ENCODE measurements at regions of chr17 and their contacts with region 1.

Region 1: DNA sequence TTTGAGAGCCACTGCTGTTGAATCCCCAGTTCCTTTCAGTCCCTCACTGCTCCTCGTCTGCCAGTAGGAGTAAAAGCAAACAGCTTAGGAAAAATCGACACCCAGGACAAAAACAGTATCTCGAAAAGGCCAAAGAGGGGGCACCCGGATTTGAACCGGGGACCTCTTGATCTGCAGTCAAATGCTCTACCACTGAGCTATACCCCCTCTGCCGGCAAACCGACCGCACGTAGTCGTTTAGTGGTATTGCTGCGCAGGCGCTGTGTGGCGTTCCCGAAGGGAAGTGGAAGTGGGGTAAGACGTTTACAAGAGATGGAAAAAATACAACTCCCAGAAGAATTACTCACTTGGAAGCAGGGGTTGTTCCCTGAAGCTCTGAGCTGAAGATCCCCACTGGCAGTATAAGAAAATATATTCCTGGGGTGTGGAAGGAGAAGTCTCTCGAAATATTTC is 2.2 kb upstream of the PLXDC1 start:
- DNase-seq: peak; percentile 88
- H3K4me3 Mint-ChIP-seq: peak overlapping the region; percentile 98
- H3K27ac Mint-ChIP-seq: peak overlapping the region; percentile 98
- H3K4me1 Mint-ChIP-seq: peaks cover 29% of the 10 kb centered on the region
- H3K27me3 Mint-ChIP-seq: peaks cover 45% of the 10 kb centered on the region

Region 2: GRCh38 chr17:38702166-38702899 is 451.3 kb before region 1 on chr17:
- intact Hi-C with region 1: loop called (anchors 1 kb)
- DNase-seq: peak; percentile 75
- H3K4me3 Mint-ChIP-seq: peak overlapping the region; percentile 97
- H3K27ac Mint-ChIP-seq: peak overlapping the region; percentile 99
- H3K4me1 Mint-ChIP-seq: peaks cover 65% of the 10 kb centered on the region
- H3K27me3 Mint-ChIP-seq: no peaks in the 10 kb centered on the region

Region 3: DNA sequence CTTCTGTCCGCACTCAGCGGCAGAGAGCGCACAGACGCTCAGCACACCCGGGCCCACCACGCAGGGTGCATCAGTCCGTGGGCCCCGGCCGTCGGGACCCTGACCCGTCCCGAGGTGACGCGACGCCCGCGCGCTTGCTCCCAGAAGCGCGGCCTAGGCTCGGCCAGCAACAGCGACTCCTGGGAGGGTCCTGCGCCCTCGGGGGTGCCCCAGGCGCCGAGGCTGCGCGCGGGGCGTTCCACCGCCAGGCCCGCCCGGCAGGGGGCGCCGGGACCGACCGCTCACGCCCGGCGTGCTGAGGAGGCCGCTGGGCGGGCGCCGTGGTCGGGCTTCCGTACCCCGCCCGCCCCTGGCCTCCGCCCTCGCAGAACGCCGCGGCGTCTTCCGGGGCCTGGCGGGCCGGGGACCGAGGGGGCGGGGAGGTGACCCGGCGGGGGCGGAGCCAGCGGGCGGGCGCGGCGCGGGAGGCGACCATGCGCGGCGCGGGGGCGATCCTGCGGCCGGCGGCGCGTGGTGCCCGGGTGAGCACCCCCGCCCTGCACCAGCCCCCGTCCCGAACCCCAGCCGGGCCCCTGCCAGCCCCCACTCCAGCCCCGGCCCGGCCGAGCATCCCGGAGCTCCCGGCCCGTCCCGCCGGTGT is 423.6 kb before region 1 on chr17 and contains the start of gene CISD3:
- intact Hi-C with region 1: no loop called
- DNase-seq: peak; percentile 88
- H3K4me3 Mint-ChIP-seq: peak within 1 kb of the TSS; percentile 94
- H3K27ac Mint-ChIP-seq: peak within 1 kb of the TSS; percentile 97
- H3K4me1 Mint-ChIP-seq: peaks cover 82% of the 10 kb centered on the region
- H3K27me3 Mint-ChIP-seq: peaks cover 2% of the 10 kb centered on the region
- total RNA-seq, gene CISD3: 39.2 and 41.4 TPM in 2 replicates

Region 4: DNA sequence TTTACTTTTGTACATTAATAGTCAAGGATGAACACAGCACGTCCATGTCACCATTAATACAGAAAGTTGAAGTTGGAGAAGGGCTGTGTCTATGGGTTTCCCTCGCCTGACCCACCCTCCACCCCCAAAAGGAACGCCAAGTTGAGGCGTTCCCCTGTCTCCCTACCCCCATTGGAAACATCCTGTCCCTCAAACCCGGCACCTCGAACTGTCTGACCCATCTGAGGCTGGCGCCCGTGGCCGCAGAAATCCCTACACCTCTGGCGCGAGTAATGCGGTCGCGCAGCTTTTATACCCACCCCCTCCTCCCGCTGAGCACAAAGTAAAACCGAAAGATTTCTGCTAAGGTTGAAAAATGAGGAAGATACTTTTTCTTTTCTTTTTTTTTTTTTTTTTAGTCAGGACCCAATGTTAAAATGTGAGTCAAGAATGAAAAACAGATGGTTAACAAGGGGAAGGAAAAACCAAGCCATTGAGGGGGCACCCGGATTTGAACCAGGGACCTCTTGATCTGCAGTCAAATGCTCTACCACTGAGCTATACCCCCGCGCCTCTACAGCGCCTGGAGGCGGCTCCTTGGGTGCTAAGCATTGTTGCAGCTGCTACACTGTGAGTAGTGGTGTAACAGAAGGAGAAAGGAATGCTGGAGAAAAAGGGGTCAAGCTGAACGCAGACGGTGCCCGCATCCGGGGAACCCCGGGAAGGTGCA is 284.7 kb before region 1 on chr17:
- intact Hi-C with region 1: loop called (anchors 1 kb)
- DNase-seq: peak; percentile 78
- H3K4me3 Mint-ChIP-seq: peak overlapping the region; percentile 91
- H3K27ac Mint-ChIP-seq: peak overlapping the region; percentile 96
- H3K4me1 Mint-ChIP-seq: peaks cover 52% of the 10 kb centered on the region
- H3K27me3 Mint-ChIP-seq: no peaks in the 10 kb centered on the region

Region 5: GRCh38 chr17:39057701-39058206 is 95.9 kb before region 1 on chr17:
- intact Hi-C with region 1: loop called (anchors 1 kb)
- DNase-seq: no peak
- H3K4me3 Mint-ChIP-seq: peak overlapping the region; percentile 76
- H3K27ac Mint-ChIP-seq: no peak overlapping the region
- H3K4me1 Mint-ChIP-seq: peaks cover 17% of the 10 kb centered on the region
- H3K27me3 Mint-ChIP-seq: peaks cover 12% of the 10 kb centered on the region

Region 6: DNA sequence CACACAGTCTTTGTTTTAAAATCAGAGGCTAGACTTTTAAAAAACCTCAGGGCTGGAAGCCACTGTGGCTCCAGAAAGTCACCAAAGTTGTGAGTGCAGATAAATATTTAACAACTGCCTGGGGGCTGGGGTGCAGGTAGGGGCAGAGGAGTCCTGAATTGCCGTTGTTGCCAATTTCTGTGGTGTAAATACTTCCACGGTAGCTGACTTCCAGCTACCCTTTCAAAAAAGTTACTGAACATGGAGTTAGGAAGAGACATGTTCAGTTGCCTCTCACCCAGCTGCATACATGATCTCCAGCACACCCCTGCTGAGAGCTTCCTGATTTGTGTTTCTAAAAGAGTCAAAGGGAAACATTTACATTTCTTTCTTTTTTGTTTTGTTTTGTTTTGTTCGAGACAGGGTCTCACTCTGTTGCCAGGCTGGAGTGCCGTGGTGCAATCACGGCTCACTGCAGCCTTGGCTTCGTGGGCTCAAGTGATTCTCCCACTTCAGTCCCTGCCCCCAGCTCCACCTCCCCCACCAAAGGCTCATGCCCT is 60.9 kb before region 1 on chr17:
- intact Hi-C with region 1: loop called (anchors 1 kb)
- DNase-seq: no peak
- H3K4me3 Mint-ChIP-seq: peak overlapping the region; percentile 67
- H3K27ac Mint-ChIP-seq: peak overlapping the region; percentile 13
- H3K4me1 Mint-ChIP-seq: peaks cover 57% of the 10 kb centered on the region
- H3K27me3 Mint-ChIP-seq: no peaks in the 10 kb centered on the region

Region 7: GRCh38 chr17:39139137-39139516 is 14.5 kb before region 1 on chr17:
- intact Hi-C with region 1: no loop called
- DNase-seq: no peak
- H3K4me3 Mint-ChIP-seq: no peak overlapping the region
- H3K27ac Mint-ChIP-seq: no peak overlapping the region
- H3K4me1 Mint-ChIP-seq: no peaks in the 10 kb centered on the region
- H3K27me3 Mint-ChIP-seq: peaks cover 3% of the 10 kb centered on the region

Region 8: GRCh38 chr17:39178513-39178912 is 24.9 kb after region 1 on chr17:
- intact Hi-C with region 1: no loop called
- DNase-seq: no peak
- H3K4me3 Mint-ChIP-seq: no peak overlapping the region
- H3K27ac Mint-ChIP-seq: no peak overlapping the region
- H3K4me1 Mint-ChIP-seq: no peaks in the 10 kb centered on the region
- H3K27me3 Mint-ChIP-seq: no peaks in the 10 kb centered on the region

Region 9: GRCh38 chr17:39199820-39200069 is 46.1 kb after region 1 on chr17:
- intact Hi-C with region 1: loop called (anchors 1 kb)
- DNase-seq: peak; percentile 84
- H3K4me3 Mint-ChIP-seq: peak overlapping the region; percentile 93
- H3K27ac Mint-ChIP-seq: peak overlapping the region; percentile 98
- H3K4me1 Mint-ChIP-seq: peaks cover 47% of the 10 kb centered on the region
- H3K27me3 Mint-ChIP-seq: no peaks in the 10 kb centered on the region

Measured in activated T-helper 1 cell treated with anti-CD3 and anti-CD28 coated beads, Interleukin-12 subunit alpha, Interleukin-12 subunit beta, Interleukin-2, Interleukin-4 antibody, amounts not matched to agents 30 ng/mL and 10 ng/mL and 1 ng/mL, durations not matched to agents 14 hours and 24 hours and 36 hours (primary cell).